ENCODE measurements at regions of chr19 and their contacts with region 1.

Region 1: GRCh38 chr19:6297202-6297601 is 17.4 kb upstream of the MLLT1 start:
- DNase-seq: no peak
- H3K4me3 Mint-ChIP-seq: no peak overlapping the region
- H3K27ac Mint-ChIP-seq: no peak overlapping the region
- H3K4me1 Mint-ChIP-seq: peaks cover 3% of the 10 kb centered on the region
- H3K27me3 Mint-ChIP-seq: no peaks in the 10 kb centered on the region

Region 2: GRCh38 chr19:6125571-6125989 is 171.6 kb before region 1 on chr19:
- intact Hi-C with region 1: loop called (anchors 2 kb)
- DNase-seq: peak; percentile 50
- H3K4me3 Mint-ChIP-seq: no peak overlapping the region
- H3K27ac Mint-ChIP-seq: no peak overlapping the region
- H3K4me1 Mint-ChIP-seq: peaks cover 4% of the 10 kb centered on the region
- H3K27me3 Mint-ChIP-seq: no peaks in the 10 kb centered on the region

Region 3: DNA sequence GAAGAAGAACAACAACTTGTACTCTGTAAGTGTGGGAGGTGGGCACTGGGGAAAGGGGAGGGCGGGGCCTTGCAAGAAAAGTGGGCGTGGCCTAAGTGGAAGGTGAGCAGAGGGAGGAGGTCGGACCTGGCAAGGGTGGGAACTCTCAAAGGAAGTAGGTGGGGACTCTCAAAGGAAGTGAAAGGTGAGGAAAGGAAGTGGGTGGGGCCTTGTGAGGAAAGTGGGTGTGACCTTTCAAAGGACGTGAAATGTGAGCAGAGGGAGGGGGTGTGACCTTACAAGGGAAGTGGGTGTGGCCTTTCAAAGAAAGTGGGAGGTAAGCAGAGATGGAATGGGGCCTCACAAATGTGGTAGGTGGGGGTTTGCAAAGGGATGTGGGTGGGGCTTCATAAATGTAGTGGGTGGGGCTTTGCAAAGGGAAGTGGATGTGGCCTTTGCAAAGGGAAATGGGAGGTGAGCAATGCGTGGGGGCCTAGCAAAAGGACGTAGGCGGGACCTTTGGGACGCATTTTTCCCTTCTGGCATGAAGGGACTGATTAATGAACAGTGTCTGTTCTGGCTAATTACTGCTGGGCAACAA is 135.8 kb before region 1 on chr19:
- intact Hi-C with region 1: loop called (anchors 1 kb)
- DNase-seq: peak; percentile 77
- H3K4me3 Mint-ChIP-seq: no peak overlapping the region
- H3K27ac Mint-ChIP-seq: peak overlapping the region; percentile 42
- H3K4me1 Mint-ChIP-seq: peaks cover 5% of the 10 kb centered on the region
- H3K27me3 Mint-ChIP-seq: peaks cover 2% of the 10 kb centered on the region

Region 4: DNA sequence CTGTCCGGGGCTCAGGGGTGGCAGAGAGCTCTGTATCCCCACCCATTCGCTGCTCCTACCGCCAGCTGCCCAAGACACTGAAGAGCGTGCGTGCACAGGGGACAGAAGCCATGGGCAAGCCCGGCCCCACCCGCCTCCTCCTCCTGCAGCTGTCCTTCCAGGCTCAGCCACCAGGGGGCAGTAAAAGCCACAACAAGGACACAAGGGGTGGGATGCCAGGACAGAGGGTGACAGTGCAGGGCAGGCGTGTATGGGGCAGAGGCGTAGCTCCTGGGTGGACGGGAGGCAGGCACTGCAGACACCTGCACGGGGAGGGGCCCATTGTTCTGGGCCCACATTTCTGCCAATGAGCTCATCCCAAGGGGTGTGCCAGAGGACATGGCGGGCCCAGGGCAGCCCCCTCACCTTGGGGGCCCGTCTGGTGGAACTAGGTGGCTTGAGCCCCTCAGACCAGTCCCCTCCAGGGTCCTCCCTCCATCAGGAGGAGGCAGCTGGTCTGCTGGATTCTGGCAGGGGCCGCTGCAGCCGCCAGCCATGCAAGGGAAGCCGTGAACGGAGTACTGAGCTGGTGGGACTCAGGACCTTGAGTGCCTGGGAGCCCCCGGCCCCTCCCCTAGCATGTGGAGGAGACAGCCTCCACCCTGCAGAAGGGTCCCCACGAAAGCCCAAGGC is 78.6 kb before region 1 on chr19:
- intact Hi-C with region 1: loop called (anchors 1 kb)
- DNase-seq: peak; percentile 74
- H3K4me3 Mint-ChIP-seq: no peak overlapping the region
- H3K27ac Mint-ChIP-seq: peak overlapping the region; percentile 38
- H3K4me1 Mint-ChIP-seq: peaks cover 2% of the 10 kb centered on the region
- H3K27me3 Mint-ChIP-seq: no peaks in the 10 kb centered on the region